Activated CD4-positive, alpha-beta T cell treated with anti-CD3 and anti-CD28 coated beads for 36 hours (primary cell): ENCODE measurements at regions of chr3 and their contacts with region 1.

Region 1: GRCh38 chr3:9749645-9750555 is at the start of gene OGG1:
- DNase-seq: peak; percentile 98
- ATAC-seq: peak; percentile 94
- H3K4me3 Mint-ChIP-seq: peak within 1 kb of the TSS; percentile 87
- H3K27ac Mint-ChIP-seq: peak within 1 kb of the TSS; percentile 91
- H3K4me1 Mint-ChIP-seq: peaks cover 46% of the 10 kb centered on the region
- H3K27me3 Mint-ChIP-seq: no peaks in the 10 kb centered on the region
- total RNA-seq, gene OGG1: 36.4 to 61.6 TPM

Region 2: DNA sequence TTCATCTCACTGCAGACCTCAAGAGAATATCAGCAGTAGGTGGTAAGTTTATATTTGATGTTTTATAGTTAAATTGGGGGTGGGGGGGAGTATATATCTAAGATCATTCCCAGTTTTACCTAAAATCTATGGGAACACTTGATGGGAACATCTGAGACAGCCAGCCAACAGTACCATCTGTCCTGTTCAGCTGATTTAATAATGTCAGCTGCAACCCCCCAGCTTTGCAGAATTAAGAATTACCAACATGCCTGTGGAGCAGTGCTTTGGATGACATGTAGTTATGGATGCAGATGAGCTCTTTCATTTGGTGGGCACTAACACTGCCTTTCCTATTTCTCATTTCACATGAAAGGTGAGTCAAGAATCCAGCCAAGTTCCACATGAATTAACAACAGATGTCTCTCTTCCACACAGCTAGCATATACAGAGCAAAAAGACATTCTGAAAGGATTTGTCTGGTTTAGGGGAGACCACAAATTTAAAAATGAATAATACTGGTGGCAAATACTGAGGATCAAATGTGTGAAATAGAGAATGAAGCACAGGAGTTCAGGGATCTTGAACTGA is 276.3 kb before region 1 on chr3:
- CTCF ChIA-PET with region 1: no interaction called
- POLR2A ChIA-PET with region 1: no interaction called
- intact Hi-C with region 1: no loop called
- DNase-seq: no peak
- ATAC-seq: no peak
- H3K4me3 Mint-ChIP-seq: no peak overlapping the region
- H3K27ac Mint-ChIP-seq: no peak overlapping the region
- H3K4me1 Mint-ChIP-seq: peaks cover 2% of the 10 kb centered on the region
- H3K27me3 Mint-ChIP-seq: no peaks in the 10 kb centered on the region

Region 3: GRCh38 chr3:9769426-9770275 is 19.8 kb after region 1 on chr3 and contains the start of gene CAMK1:
- CTCF ChIA-PET with region 1: interaction called, 8 read pairs
- POLR2A ChIA-PET with region 1: interaction called, 3 read pairs
- intact Hi-C with region 1: loop called in 1 of 2 experiments (anchors 2 kb)
- DNase-seq: peak; percentile 88
- ATAC-seq: peak; percentile 97
- H3K4me3 Mint-ChIP-seq: peak within 1 kb of the TSS; percentile 79
- H3K27ac Mint-ChIP-seq: peak within 1 kb of the TSS; percentile 78
- H3K4me1 Mint-ChIP-seq: peaks cover 21% of the 10 kb centered on the region
- H3K27me3 Mint-ChIP-seq: no peaks in the 10 kb centered on the region
- total RNA-seq, gene CAMK1: 48.4 to 53.1 TPM

Region 4: GRCh38 chr3:9843715-9844438 is 94.0 kb after region 1 on chr3 and contains the start of gene RPUSD3:
- CTCF ChIA-PET with region 1: no interaction called
- POLR2A ChIA-PET with region 1: no interaction called
- intact Hi-C with region 1: loop called in 1 of 2 experiments (anchors 1 kb)
- DNase-seq: peak; percentile 98
- ATAC-seq: peak; percentile 97
- H3K4me3 Mint-ChIP-seq: peak within 1 kb of the TSS; percentile 99
- H3K27ac Mint-ChIP-seq: peak within 1 kb of the TSS; percentile 96
- H3K4me1 Mint-ChIP-seq: peaks cover 28% of the 10 kb centered on the region
- H3K27me3 Mint-ChIP-seq: no peaks in the 10 kb centered on the region
- total RNA-seq, gene RPUSD3: 79.2 to 81.5 TPM